ENCODE measurements at regions of chr15 and their contacts with region 1.

Region 1: DNA sequence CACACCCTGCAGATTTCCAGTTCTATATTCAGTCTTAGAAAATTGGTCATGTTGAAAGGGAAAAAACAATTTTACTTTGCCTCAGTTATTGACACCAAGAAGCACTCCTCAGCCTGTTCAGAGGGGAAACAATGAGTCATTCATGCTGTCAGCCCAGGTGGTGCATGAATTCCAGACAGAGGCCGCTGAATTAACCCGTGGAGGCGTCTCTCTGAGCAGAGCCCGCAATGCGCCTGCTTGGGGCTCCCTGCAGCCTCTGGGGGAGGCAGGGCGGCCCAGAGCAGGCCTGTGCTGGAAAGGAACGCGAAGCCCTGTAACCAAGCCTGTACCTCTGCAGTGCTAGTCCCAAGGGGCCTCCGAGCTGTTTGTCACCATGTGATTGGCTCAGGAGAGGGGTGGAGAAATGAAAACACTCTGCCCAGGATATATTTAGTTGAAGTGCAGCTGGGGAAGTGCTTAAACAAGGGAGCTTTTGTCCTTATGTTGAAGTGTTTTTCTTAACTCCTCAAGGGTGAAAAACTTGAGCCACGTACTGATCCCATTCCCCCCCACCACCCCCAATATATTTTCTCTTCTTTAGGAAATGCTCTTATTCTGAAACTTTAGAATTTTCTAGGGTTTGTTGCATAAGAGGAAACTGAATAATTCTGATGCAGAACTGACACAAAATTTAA is 68.3 kb upstream of the CHD2 start:
- DNase-seq: peak; percentile 72 to 95 (median 92)
- H3K4me3 ChIP-seq: peak overlapping the region; percentile 2 to 64 (median 45)
- H3K27ac ChIP-seq: peak overlapping the region; percentile 94 to 100 (median 99)
- H3K27me3 ChIP-seq: no peaks in the 10 kb centered on the region
- CTCF ChIP-seq: peak in 19 of 56 donors; percentile 7 to 37 (median 22)

Region 2: GRCh38 chr15:92666780-92667179 is 165.0 kb before region 1 on chr15:
- intact Hi-C with region 1: no loop called
- DNase-seq: no peak
- H3K4me3 ChIP-seq: no peak overlapping the region
- H3K27ac ChIP-seq: peak overlapping the region in 6 of 59 donors; percentile 6 to 57 (median 46)
- H3K27me3 ChIP-seq: no peaks in the 10 kb centered on the region
- CTCF ChIP-seq: no peak

Region 3: DNA sequence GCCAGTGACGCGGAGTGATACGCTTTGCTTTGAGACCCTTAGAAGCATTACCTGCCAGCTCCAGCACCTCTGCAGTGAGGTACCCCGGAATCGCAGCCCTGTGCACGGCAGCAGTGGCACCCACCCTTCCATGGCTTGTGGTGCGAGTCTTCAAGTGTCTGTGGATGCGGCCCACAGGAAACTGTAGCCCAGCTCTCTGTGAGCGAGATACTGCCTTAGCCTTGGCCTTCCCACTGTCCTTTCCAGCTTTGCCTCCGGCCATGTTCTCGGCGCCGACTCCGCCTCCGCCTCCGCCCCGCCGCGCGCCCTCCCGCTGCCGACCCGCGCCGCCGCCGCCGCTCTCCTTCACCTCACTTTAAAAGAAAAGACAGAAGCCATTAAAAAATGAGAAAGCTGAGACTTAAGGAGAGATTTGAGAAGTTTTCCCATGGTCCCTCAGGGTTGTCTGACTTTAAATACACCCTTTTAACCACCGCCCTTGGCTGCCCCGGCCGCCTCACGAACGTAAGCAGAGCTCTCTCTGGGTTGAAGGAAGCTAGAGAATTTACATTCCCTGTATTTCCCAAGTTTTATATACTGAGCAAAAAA is 97.8 kb before region 1 on chr15:
- intact Hi-C with region 1: no loop called
- DNase-seq: peak in 8 of 10 donors; percentile 16 to 61 (median 51)
- H3K4me3 ChIP-seq: peak overlapping the region; percentile 14 to 75 (median 61)
- H3K27ac ChIP-seq: peak overlapping the region in 58 of 59 donors; percentile 6 to 95 (median 80)
- H3K27me3 ChIP-seq: no peaks in the 10 kb centered on the region
- CTCF ChIP-seq: peak in 9 of 56 donors; percentile 7 to 37 (median 18)

Region 4: DNA sequence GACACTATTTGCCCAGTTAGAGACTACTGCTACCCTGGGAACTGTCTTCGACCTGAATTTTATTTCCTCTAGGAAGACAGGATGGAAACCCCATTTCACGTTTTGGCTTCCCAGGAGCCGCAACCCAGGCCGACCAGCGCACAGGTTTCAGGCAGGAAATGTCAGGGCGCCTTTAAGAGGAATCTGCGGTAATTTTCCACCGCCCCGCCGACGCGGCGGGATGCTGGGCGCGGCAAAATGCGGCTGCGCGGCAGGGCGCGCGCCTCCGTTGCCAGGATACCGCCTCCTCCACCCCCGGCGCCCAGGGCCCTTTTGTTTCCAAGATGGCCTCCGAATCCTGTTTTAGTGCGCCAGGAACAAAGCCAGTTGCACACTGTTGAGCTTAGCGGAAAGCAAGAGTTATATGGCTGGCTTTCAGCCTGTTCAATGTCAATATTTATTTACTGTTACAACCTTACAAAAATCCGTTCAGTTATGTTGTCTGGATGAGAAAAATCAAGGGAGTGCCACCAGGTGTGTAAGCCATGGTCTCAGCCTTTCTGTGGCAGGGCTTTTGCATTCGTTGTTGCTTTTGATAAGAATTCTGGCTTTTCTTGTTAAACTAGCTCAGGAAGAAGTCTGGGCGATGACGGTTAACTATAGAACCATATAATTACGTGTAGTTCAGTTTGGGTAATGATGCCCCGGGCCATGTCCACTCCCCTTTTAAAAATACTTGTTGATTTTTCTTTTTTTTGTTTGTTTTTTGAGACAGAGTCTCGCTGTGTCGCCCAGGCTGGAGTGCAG is 11.4 kb before region 1 on chr15:
- intact Hi-C with region 1: loop called in 1 of 2 experiments (anchors 1 kb)
- DNase-seq: peak; percentile 86 to 95 (median 92)
- H3K4me3 ChIP-seq: peak overlapping the region; percentile 17 to 79 (median 58)
- H3K27ac ChIP-seq: peak overlapping the region; percentile 89 to 100 (median 99)
- H3K27me3 ChIP-seq: no peaks in the 10 kb centered on the region
- CTCF ChIP-seq: peak in 16 of 56 donors; percentile 2 to 30 (median 13)

Region 5: DNA sequence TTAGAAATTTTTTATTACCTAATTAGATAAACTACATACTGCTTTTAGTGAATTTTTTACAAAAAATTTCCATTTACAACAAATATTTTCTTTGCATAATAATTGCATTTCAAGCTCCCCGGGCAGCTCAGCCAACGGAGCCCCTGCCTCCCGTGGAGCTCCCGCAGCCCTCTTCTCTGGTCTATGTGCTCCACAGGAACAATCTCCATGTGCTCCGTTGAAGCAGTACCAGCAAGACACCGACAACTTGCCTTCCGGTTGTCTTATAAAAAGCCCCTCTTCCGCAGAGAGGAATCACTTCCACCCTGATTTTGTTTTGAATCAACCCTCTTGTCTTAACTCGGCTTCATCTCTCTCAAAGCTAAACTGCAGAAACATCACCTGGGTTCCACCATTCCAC is 21.4 kb after region 1 on chr15:
- intact Hi-C with region 1: no loop called
- DNase-seq: no peak
- H3K4me3 ChIP-seq: no peak overlapping the region
- H3K27ac ChIP-seq: no peak overlapping the region
- H3K27me3 ChIP-seq: no peaks in the 10 kb centered on the region
- CTCF ChIP-seq: no peak

Region 6: GRCh38 chr15:92881802-92882696 is 50.3 kb after region 1 on chr15:
- intact Hi-C with region 1: loop called (anchors 1 kb)
- DNase-seq: peak; percentile 95 to 100 (median 99)
- H3K4me3 ChIP-seq: peak overlapping the region; percentile 33 to 98 (median 89)
- H3K27ac ChIP-seq: peak overlapping the region; percentile 91 to 100 (median 100)
- H3K27me3 ChIP-seq: no peaks in the 10 kb centered on the region
- CTCF ChIP-seq: no peak

Region 7: DNA sequence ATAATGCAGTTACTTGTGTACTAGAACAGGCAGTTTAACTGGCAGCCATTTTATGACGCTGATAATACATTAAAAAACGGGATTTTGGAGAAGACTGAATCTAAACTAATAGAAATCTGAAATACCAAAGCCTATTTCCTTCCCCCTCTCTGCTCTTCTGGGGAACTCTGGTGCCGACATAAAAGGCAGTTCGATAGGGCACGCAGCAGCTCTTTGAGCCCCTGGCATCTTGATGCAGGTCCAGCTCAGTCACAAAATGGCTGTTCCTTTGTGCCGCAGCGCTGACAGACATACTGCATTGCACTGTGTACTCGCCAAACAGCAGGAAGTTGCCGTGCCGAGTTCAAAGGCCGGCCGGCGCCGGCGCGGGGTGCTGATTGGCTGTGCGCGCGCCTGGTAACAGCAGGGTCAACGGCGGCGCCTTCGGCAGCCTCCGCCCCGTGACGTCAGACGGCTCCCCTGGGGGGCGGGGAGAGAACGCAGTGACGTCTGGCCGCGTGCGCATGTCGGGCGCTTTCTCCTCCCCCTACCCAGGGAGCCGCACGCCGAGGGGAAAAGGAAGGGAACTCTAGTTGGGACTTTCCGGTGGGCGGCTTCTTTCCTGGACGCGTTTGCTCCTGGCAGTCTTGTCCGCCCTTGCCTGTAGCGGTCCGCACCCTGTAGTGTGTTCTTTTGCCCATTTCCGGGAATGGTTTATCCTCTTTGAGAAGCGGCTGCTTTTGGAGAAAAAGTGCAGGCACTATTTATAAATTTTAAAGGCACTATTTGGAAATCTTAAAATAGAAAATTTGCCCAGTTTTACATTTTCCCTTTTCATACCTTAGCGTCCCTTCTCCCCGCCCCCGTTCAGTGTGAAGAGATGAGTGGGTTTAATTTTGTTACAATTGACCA is 72.4 kb after region 1 on chr15:
- intact Hi-C with region 1: loop called in 1 of 2 experiments (anchors 5 kb)
- DNase-seq: peak; percentile 97 to 100 (median 99)
- H3K4me3 ChIP-seq: peak overlapping the region; percentile 45 to 97 (median 73)
- H3K27ac ChIP-seq: peak overlapping the region; percentile 77 to 100 (median 99)
- H3K27me3 ChIP-seq: no peaks in the 10 kb centered on the region
- CTCF ChIP-seq: peak in 26 of 56 donors; percentile 7 to 41 (median 19)